Activated CD4-positive, alpha-beta memory T cell treated with anti-CD3 and anti-CD28 coated beads for 36 hours (primary cell): ENCODE measurements at regions of chr10 and their contacts with region 1.

Region 1: DNA sequence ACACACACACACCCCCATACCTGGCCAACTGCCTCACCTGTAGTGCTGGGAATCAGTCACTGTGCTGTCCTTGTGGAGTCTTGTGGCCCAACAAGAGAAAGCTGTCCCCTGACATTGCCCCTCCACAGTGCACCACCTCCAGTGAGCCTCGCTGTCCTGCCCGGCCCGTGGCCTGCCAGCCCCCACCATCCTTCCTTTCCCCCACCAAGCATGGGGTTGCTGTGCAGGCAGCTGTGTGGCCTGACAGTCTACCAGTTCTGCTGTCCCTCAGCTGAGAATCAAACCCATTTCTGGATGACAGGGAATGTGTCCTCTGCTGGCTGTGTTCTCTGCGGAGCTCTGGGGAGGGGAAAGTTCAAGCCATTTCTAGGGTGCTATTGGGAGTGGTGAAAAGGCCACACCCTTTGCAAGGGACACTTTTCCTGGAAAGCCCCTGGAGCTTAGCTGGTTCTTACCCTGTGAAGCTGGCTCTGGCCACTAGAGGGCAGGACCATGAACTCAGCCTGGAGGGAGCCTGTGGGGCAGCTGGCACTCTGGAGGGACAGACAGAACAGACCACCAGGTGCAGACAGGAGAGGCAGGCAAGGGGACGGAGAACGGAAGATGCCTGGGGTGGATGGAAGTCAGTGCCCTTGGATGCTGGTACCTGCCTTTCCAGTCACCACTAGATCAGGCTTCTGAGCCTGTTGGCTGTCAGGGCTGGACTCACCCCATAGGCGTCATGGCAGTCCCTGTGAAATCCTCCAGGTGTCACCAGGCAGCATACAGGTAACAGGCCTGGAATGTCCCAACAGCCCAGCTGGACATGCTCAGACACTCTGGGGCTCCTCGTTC is 10.5 kb upstream of the MTPAP start:
- DNase-seq: peak; percentile 78
- H3K4me3 Mint-ChIP-seq: no peak overlapping the region
- H3K27ac Mint-ChIP-seq: no peak overlapping the region
- H3K4me1 Mint-ChIP-seq: peaks cover 4% of the 10 kb centered on the region
- H3K27me3 Mint-ChIP-seq: no peaks in the 10 kb centered on the region

Region 2: DNA sequence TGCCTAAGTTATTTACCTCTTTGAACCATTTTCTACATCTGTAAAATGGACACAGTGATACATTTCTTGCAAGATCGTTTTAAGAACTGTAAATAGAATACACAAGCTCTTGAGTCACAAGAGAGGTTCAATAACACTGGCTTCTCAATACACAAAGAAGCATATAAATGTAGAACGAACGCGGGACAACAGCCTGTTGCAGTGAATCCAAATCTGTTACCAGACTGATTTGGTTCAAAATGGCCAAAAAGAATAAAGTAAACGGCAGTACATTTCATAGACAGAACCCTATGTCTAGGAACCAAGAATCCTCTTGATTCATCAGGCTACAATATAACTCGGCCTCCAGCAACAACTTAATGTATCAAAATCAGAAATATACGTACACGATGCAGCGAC is 11.2 kb before region 1 on chr10:
- CTCF ChIA-PET with region 1: interaction called, 46 read pairs
- POLR2A ChIA-PET with region 1: no interaction called
- intact Hi-C with region 1: no loop called
- DNase-seq: no peak
- H3K4me3 Mint-ChIP-seq: peak overlapping the region; percentile 99
- H3K27ac Mint-ChIP-seq: peak overlapping the region; percentile 93
- H3K4me1 Mint-ChIP-seq: peaks cover 40% of the 10 kb centered on the region
- H3K27me3 Mint-ChIP-seq: no peaks in the 10 kb centered on the region

Region 3: DNA sequence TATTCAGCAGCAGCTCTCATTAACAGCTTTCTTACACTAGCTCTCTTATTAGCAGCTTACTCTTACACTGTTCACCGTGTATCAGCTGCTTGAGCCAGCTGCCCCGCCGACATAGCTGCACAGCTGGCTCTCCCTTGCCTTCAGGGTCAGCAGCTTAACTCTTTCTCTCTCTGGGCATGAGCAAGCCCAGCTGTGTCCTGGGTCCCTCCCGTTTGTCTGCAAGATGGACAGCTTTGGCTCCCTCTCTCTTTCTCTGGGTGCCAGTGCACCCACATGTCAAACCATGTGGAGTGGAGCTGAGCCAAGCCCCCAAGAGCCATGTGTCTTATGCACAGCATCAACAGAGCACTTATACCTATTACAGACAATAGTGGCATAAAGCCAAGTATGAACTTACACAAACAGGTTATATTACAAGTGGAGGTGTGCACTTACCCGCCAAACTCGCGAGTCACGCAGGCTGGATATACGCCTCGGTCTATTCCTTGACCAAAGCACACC is 25.2 kb after region 1 on chr10:
- CTCF ChIA-PET with region 1: interaction called, 12 read pairs
- POLR2A ChIA-PET with region 1: no interaction called
- intact Hi-C with region 1: no loop called
- DNase-seq: peak; percentile 37
- H3K4me3 Mint-ChIP-seq: no peak overlapping the region
- H3K27ac Mint-ChIP-seq: no peak overlapping the region
- H3K4me1 Mint-ChIP-seq: no peaks in the 10 kb centered on the region
- H3K27me3 Mint-ChIP-seq: peaks cover 13% of the 10 kb centered on the region

Region 4: GRCh38 chr10:30398788-30399187 is 39.2 kb after region 1 on chr10:
- CTCF ChIA-PET with region 1: no interaction called
- POLR2A ChIA-PET with region 1: no interaction called
- intact Hi-C with region 1: no loop called
- DNase-seq: no peak
- H3K4me3 Mint-ChIP-seq: no peak overlapping the region
- H3K27ac Mint-ChIP-seq: no peak overlapping the region
- H3K4me1 Mint-ChIP-seq: peaks cover 12% of the 10 kb centered on the region
- H3K27me3 Mint-ChIP-seq: peaks cover 9% of the 10 kb centered on the region

Region 5: GRCh38 chr10:30959855-30960247 is 600.3 kb after region 1 on chr10:
- CTCF ChIA-PET with region 1: no interaction called
- POLR2A ChIA-PET with region 1: no interaction called
- intact Hi-C with region 1: no loop called
- DNase-seq: no peak
- H3K4me3 Mint-ChIP-seq: no peak overlapping the region
- H3K27ac Mint-ChIP-seq: no peak overlapping the region
- H3K4me1 Mint-ChIP-seq: peaks cover 9% of the 10 kb centered on the region
- H3K27me3 Mint-ChIP-seq: no peaks in the 10 kb centered on the region